GM12878 (cell line): ENCODE measurements at regions of chr1 and their contacts with region 1.

Region 1: GRCh38 chr1:163315773-163316374 is 5.9 kb upstream of the NUF2 start:
- DNase-seq: no peak
- ATAC-seq: peak; percentile 48; the same call in 2 of the 3 replicates
- H3K4me3 ChIP-seq: no peak overlapping the region
- H3K27ac ChIP-seq: no peak overlapping the region
- H3K4me1 ChIP-seq: no peaks in the 10 kb centered on the region
- H3K27me3 ChIP-seq: no peaks in the 10 kb centered on the region
- CTCF ChIP-seq: peak in 2 of 3 experiments; percentile 45 to 55; a peak in 5 of 6 replicates
- EP300 ChIP-seq: no peak
- POLR2A ChIP-seq: no peak
- RAD21 ChIP-seq: peak; percentile 68

Region 2: GRCh38 chr1:162854245-162854882 is 461.5 kb before region 1 on chr1:
- CTCF ChIA-PET with region 1: interaction called, 76 read pairs
- POLR2A ChIA-PET with region 1: no interaction called
- RAD21 ChIA-PET with region 1: interaction called, 31 read pairs
- SMC1A ChIA-PET with region 1: interaction called, 33 read pairs
- in situ Hi-C with region 1: loop called (anchors 5 kb)
- intact Hi-C with region 1: loop called (anchors 1 kb)
- DNase-seq: no peak
- ATAC-seq: peak; percentile 94
- H3K4me3 ChIP-seq: no peak overlapping the region
- H3K27ac ChIP-seq: no peak overlapping the region
- H3K4me1 ChIP-seq: no peaks in the 10 kb centered on the region
- H3K27me3 ChIP-seq: 0 out of 4 replicates have a peak, but pooled peaks cover 0 to 1% of the 10 kb centered on the region in 2 experiments
- CTCF ChIP-seq: peak; percentile 70 to 81 (median 72)
- EP300 ChIP-seq: no peak
- POLR2A ChIP-seq: no peak
- RAD21 ChIP-seq: peak; percentile 67

Region 3: GRCh38 chr1:163060343-163061007 is 255.4 kb before region 1 on chr1:
- CTCF ChIA-PET with region 1: interaction called, 11 read pairs
- POLR2A ChIA-PET with region 1: no interaction called
- RAD21 ChIA-PET with region 1: no interaction called
- SMC1A ChIA-PET with region 1: no interaction called
- in situ Hi-C with region 1: no loop called
- intact Hi-C with region 1: no loop called
- DNase-seq: no peak
- ATAC-seq: no peak
- H3K4me3 ChIP-seq: no peak overlapping the region
- H3K27ac ChIP-seq: no peak overlapping the region
- H3K4me1 ChIP-seq: no peaks in the 10 kb centered on the region
- H3K27me3 ChIP-seq: 0 out of 4 replicates have a peak, but pooled peaks cover 0 to 2% of the 10 kb centered on the region in 2 experiments
- CTCF ChIP-seq: no peak
- EP300 ChIP-seq: no peak
- POLR2A ChIP-seq: no peak
- RAD21 ChIP-seq: no peak

Region 4: GRCh38 chr1:163174524-163175437 is 141.1 kb before region 1 on chr1:
- CTCF ChIA-PET with region 1: interaction called, 27 read pairs
- POLR2A ChIA-PET with region 1: no interaction called
- RAD21 ChIA-PET with region 1: interaction called, 9 read pairs
- SMC1A ChIA-PET with region 1: interaction called, 27 read pairs
- in situ Hi-C with region 1: no loop called
- intact Hi-C with region 1: loop called (anchors 2 kb)
- DNase-seq: no peak
- ATAC-seq: peak; percentile 76
- H3K4me3 ChIP-seq: no peak overlapping the region
- H3K27ac ChIP-seq: no peak overlapping the region
- H3K4me1 ChIP-seq: no peaks in the 10 kb centered on the region
- H3K27me3 ChIP-seq: no peaks in the 10 kb centered on the region
- CTCF ChIP-seq: peak; percentile 73 to 82 (median 75)
- EP300 ChIP-seq: no peak
- POLR2A ChIP-seq: no peak
- RAD21 ChIP-seq: peak; percentile 75

Region 5: DNA sequence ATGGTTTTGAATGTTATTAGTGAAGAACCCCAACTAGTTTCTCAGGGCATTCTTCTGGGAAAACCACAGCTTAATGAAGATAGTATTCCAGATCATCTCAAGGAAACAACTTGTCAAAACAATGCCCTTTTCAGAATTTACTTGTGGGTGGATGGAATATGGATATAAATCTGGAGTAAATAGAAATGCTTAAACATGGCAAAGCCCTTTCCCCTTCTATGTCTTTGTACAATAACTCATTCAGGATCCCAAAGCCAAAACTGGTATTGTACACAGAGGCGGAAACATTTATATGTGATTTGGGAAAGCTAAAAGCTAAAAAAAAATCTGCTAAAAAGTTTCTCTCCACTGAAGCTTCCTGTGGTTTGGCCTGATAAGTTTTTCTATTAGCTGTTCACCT is 57.7 kb before region 1 on chr1:
- CTCF ChIA-PET with region 1: no interaction called
- POLR2A ChIA-PET with region 1: no interaction called
- RAD21 ChIA-PET with region 1: no interaction called
- SMC1A ChIA-PET with region 1: no interaction called
- in situ Hi-C with region 1: no loop called
- intact Hi-C with region 1: no loop called
- DNase-seq: no peak
- ATAC-seq: no peak
- H3K4me3 ChIP-seq: no peak overlapping the region
- H3K27ac ChIP-seq: no peak overlapping the region
- H3K4me1 ChIP-seq: no peaks in the 10 kb centered on the region
- H3K27me3 ChIP-seq: no peaks in the 10 kb centered on the region
- CTCF ChIP-seq: no peak
- EP300 ChIP-seq: no peak
- POLR2A ChIP-seq: no peak
- RAD21 ChIP-seq: no peak

Region 6: GRCh38 chr1:163300568-163300967 is 15.3 kb before region 1 on chr1:
- CTCF ChIA-PET with region 1: interaction called, 17 read pairs
- POLR2A ChIA-PET with region 1: no interaction called
- RAD21 ChIA-PET with region 1: interaction called, 11 read pairs
- SMC1A ChIA-PET with region 1: interaction called, 9 read pairs
- in situ Hi-C with region 1: no loop called
- intact Hi-C with region 1: no loop called
- DNase-seq: no peak
- ATAC-seq: no peak
- H3K4me3 ChIP-seq: no peak overlapping the region
- H3K27ac ChIP-seq: no peak overlapping the region
- H3K4me1 ChIP-seq: no peaks in the 10 kb centered on the region
- H3K27me3 ChIP-seq: no peaks in the 10 kb centered on the region
- CTCF ChIP-seq: no peak
- EP300 ChIP-seq: no peak
- POLR2A ChIP-seq: no peak
- RAD21 ChIP-seq: no peak